ENCODE measurements at regions of chr7 and their contacts with region 1.

Region 1: GRCh38 chr7:129210256-129210988 is 14.4 kb upstream of the AHCYL2 start:
- DNase-seq: peak; percentile 88
- ATAC-seq: peak; percentile 94
- H3K4me3 Mint-ChIP-seq: no peak overlapping the region
- H3K27ac Mint-ChIP-seq: no peak overlapping the region
- H3K4me1 Mint-ChIP-seq: no peaks in the 10 kb centered on the region
- H3K27me3 Mint-ChIP-seq: no peaks in the 10 kb centered on the region
- CTCF ChIP-seq: peak; percentile 86

Region 2: DNA sequence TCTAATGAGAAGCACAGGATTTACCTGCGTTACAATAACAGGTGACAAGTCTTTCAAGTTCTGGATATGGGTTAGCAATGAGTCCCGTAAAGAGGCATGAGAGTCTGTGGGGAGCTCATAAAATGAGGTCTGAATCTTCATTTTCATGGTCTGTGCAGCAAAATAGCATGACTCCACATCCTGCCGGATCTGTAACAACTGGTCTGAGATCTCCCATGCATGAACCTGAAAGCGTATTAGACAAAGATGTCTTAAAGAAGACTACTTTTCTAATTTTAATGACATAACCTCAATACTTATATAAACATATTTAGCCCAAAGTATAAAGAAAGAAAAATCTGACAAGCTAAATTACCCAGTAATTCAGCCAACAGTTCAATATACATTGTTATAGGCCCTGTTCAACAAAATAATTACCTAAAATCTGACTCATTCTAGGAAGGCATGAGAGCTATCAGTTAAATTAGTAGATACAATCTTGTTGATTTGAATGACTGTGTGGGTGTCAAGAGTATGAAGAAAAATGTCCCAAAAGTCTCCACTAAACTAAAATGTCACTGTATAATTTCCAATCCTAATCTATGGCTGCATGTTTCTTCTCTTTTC is 192.4 kb before region 1 on chr7:
- CTCF ChIA-PET with region 1: no interaction called
- POLR2A ChIA-PET with region 1: no interaction called
- intact Hi-C with region 1: no loop called
- DNase-seq: no peak
- ATAC-seq: no peak
- H3K4me3 Mint-ChIP-seq: no peak overlapping the region
- H3K27ac Mint-ChIP-seq: peak overlapping the region; percentile 32
- H3K4me1 Mint-ChIP-seq: peaks cover 32% of the 10 kb centered on the region
- H3K27me3 Mint-ChIP-seq: no peaks in the 10 kb centered on the region
- CTCF ChIP-seq: no peak

Region 3: GRCh38 chr7:129197771-129198170 is 12.7 kb before region 1 on chr7:
- CTCF ChIA-PET with region 1: interaction called, 11 read pairs
- POLR2A ChIA-PET with region 1: no interaction called
- intact Hi-C with region 1: no loop called
- DNase-seq: no peak
- ATAC-seq: no peak
- H3K4me3 Mint-ChIP-seq: no peak overlapping the region
- H3K27ac Mint-ChIP-seq: no peak overlapping the region
- H3K4me1 Mint-ChIP-seq: no peaks in the 10 kb centered on the region
- H3K27me3 Mint-ChIP-seq: peaks cover 4% of the 10 kb centered on the region
- CTCF ChIP-seq: no peak

Region 4: GRCh38 chr7:129224251-129225205 is 14.1 kb after region 1 on chr7 and contains the start of gene AHCYL2:
- CTCF ChIA-PET with region 1: interaction called, 40 read pairs
- POLR2A ChIA-PET with region 1: no interaction called
- intact Hi-C with region 1: no loop called
- DNase-seq: peak; percentile 98
- ATAC-seq: peak; percentile 93
- H3K4me3 Mint-ChIP-seq: peak within 1 kb of the TSS; percentile 79
- H3K27ac Mint-ChIP-seq: peak within 1 kb of the TSS; percentile 91
- H3K4me1 Mint-ChIP-seq: peaks cover 25% of the 10 kb centered on the region
- H3K27me3 Mint-ChIP-seq: no peaks in the 10 kb centered on the region
- CTCF ChIP-seq: no peak
- total RNA-seq, gene AHCYL2: 8.1 to 9.6 TPM

Measured in activated CD8-positive, alpha-beta T cell treated with anti-CD3 and anti-CD28 coated beads for 36 hours (primary cell).